ENCODE measurements at regions of chr16 and their contacts with region 1.

Region 1: DNA sequence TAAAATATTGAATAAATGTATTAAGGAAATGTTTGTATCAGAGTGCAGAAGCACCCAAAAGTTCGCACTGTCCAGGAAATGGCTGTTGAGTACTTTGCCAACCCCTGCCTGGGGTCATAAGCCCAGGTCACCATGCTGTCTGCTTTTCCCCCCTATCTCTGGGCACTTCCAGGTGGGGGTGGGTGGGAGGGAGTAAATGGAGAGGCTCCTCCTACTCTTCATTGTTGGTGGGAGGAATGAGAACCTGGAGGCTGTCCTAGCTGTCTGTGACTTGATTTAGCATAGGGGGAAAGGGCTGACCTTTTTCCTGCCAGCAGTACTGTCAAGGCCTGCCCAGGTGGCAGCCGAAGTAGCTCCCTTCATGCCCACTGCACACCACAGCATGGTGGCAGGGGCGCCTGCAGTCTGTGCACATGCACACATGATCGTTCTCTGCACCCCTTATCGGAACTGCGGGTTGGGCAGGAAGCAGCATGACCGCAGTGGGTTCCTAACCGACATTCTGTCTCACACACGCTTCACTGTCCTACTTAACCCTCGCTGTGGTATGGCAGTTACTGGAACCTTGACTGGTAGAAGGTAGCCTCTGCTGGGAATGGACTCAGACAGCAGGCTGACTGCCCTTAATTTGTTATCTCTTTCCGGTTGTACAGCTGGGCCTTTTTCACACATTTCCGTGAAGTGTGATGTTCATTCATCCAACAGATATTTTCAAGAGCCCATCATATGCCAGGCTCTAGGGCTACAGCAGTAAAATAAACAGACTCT is 41.5 kb downstream of the LDHD start:
- DNase-seq: peak; percentile 96
- ATAC-seq: peak; percentile 94
- H3K4me3 Mint-ChIP-seq: peak overlapping the region; percentile 33
- H3K27ac Mint-ChIP-seq: peak overlapping the region; percentile 85
- H3K4me1 Mint-ChIP-seq: peaks cover 55% of the 10 kb centered on the region
- H3K27me3 Mint-ChIP-seq: no peaks in the 10 kb centered on the region

Region 2: GRCh38 chr16:74984535-74985296 is 90.4 kb before region 1 on chr16 and contains the start of gene WDR59:
- CTCF ChIA-PET with region 1: no interaction called
- DNase-seq: peak; percentile 100
- ATAC-seq: peak; percentile 100
- H3K4me3 Mint-ChIP-seq: peak within 1 kb of the TSS; percentile 85
- H3K27ac Mint-ChIP-seq: peak within 1 kb of the TSS; percentile 89
- H3K4me1 Mint-ChIP-seq: peaks cover 14% of the 10 kb centered on the region
- H3K27me3 Mint-ChIP-seq: no peaks in the 10 kb centered on the region
- total RNA-seq, gene WDR59: 59.0 to 74.6 TPM

Region 3: GRCh38 chr16:75099756-75100602 is 24.9 kb after region 1 on chr16:
- CTCF ChIA-PET with region 1: interaction called, 17 read pairs
- DNase-seq: peak; percentile 84
- ATAC-seq: peak; percentile 73
- H3K4me3 Mint-ChIP-seq: peak overlapping the region; percentile 19
- H3K27ac Mint-ChIP-seq: peak overlapping the region; percentile 93
- H3K4me1 Mint-ChIP-seq: peaks cover 56% of the 10 kb centered on the region
- H3K27me3 Mint-ChIP-seq: no peaks in the 10 kb centered on the region

Region 4: DNA sequence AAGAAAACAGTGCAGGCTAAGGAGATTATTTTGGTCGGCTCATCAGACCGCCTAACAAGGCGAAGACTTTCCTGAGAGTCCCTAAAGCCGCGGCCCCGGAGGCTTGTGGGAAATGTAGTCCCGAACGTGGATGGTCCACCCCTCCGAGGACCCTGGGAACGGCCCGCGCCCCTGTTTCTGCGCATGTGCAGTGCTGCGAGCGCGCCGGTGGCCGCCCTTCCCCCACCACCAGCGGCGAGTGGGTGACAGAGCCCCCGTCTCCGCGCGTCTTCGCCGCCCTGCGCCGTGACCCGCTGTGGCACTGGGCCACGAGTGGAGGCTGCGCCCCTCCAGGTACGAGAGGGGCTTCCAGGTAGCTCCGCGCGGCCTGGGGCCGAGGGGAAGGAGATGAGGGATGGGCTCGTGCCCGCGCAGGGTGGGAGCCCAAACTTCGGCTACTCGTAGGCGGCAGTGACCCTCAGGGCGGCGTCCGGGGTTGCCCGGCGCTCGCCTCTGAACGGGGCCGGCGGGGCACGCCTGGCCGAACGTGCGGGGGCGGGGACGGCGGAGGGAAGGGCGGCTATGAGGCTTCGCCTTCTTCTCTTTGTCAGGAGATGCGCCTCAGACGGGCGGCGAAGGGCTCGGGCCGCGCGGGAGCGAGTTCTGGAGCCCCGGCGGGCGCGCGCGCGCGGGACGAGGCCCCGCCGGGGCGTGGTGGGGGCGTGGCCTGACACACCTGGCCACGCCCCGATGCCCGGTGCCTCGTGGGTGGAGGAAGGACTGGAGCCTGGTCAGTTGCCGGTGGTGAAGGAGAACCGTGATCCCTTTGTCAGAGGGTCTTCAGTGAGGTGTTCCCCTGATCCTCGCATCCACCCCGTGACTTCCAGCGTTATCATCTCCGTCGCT is 73.4 kb after region 1 on chr16 and contains the start of gene ZFP1:
- CTCF ChIA-PET with region 1: no interaction called
- DNase-seq: peak; percentile 96
- ATAC-seq: peak; percentile 93
- H3K4me3 Mint-ChIP-seq: peak within 1 kb of the TSS; percentile 86
- H3K27ac Mint-ChIP-seq: peak within 1 kb of the TSS; percentile 82
- H3K4me1 Mint-ChIP-seq: peaks cover 26% of the 10 kb centered on the region
- H3K27me3 Mint-ChIP-seq: no peaks in the 10 kb centered on the region
- total RNA-seq, gene ZFP1: 13.6 to 15.6 TPM

Measured in activated CD8-positive, alpha-beta memory T cell treated with anti-CD3 and anti-CD28 coated beads, Interleukin-2, amount 10 ng/mL, durations not matched to agents 7 days and 5 days (primary cell).